ENCODE measurements at regions of chr16 and their contacts with region 1.

Region 1: DNA sequence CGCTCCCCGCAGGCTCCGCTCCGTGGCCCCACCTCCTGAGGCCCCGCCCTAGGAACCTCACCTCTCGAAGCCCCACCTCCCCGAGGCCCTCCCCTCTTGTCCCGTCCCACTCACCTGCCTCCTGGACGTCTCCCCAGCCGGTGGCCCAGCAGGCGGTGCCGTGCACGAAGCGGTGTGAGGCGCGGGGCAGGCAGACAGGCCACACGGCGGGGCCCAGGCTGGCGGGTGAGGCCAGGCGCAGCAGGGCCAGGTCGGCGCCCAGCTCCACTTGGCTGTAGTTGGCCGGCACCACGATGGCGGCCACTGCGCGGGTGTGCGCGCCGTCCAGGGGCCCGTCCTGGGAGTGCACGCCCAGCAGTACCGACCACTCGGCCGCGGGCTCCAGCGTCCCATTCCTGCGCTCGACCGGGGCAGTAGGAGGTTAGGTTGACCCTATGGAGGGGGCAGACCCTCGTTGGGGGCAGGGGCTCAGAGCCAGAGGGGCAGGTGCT is 1.5 kb downstream of the PRSS36 start:
- DNase-seq: peak; percentile 83
- H3K4me3 Mint-ChIP-seq: peak overlapping the region; percentile 47
- H3K27ac Mint-ChIP-seq: no peak overlapping the region
- H3K4me1 Mint-ChIP-seq: peaks cover 38% of the 10 kb centered on the region
- H3K27me3 Mint-ChIP-seq: peaks cover 29% of the 10 kb centered on the region
- CTCF ChIP-seq: no peak

Region 2: DNA sequence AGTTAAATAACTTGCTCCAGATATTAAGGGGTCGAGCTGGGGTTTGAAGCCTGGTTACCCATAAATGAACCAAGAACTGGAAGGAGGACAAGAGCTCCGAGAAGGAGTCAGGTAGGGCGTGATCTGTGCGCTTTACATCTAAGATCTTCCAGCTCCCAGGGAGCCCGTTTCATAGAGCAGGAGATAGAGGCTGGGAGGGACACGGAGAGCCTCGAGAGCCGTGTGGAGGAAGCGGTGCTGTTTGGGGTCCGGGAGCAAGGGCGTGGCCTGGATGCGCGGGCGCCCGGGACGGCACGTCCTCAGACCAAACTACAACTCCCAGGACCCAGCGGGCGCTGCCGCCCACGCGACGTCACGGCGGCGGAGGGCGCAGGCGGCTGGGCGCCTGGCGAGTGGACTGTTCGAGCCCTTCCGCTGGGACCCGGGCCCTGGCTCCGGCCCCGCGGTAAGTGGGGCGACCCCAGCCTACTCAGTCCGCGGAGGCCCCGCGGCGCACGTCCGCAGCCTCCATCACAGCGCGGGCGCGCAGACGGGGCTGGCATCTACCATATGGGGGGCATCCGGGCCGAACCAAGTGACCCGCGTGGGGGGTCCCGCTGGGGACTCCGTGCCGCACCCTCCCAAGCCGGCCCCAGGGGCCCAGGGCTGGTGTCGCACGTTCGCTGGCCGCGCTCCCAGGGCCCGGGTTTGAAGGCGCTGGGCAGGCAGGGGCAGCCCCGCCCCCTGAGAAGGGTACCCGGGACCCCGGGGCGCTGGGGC is 40.1 kb before region 1 on chr16 and contains the start of gene BCKDK:
- CTCF ChIA-PET with region 1: no interaction called
- intact Hi-C with region 1: loop called (anchors 5 kb)
- DNase-seq: peak; percentile 76
- H3K4me3 Mint-ChIP-seq: peak within 1 kb of the TSS; percentile 64
- H3K27ac Mint-ChIP-seq: peak within 1 kb of the TSS; percentile 74
- H3K4me1 Mint-ChIP-seq: peaks cover 31% of the 10 kb centered on the region
- H3K27me3 Mint-ChIP-seq: no peaks in the 10 kb centered on the region
- CTCF ChIP-seq: no peak
- total RNA-seq, gene BCKDK: 49.3 and 52.0 TPM in 2 replicates

Region 3: DNA sequence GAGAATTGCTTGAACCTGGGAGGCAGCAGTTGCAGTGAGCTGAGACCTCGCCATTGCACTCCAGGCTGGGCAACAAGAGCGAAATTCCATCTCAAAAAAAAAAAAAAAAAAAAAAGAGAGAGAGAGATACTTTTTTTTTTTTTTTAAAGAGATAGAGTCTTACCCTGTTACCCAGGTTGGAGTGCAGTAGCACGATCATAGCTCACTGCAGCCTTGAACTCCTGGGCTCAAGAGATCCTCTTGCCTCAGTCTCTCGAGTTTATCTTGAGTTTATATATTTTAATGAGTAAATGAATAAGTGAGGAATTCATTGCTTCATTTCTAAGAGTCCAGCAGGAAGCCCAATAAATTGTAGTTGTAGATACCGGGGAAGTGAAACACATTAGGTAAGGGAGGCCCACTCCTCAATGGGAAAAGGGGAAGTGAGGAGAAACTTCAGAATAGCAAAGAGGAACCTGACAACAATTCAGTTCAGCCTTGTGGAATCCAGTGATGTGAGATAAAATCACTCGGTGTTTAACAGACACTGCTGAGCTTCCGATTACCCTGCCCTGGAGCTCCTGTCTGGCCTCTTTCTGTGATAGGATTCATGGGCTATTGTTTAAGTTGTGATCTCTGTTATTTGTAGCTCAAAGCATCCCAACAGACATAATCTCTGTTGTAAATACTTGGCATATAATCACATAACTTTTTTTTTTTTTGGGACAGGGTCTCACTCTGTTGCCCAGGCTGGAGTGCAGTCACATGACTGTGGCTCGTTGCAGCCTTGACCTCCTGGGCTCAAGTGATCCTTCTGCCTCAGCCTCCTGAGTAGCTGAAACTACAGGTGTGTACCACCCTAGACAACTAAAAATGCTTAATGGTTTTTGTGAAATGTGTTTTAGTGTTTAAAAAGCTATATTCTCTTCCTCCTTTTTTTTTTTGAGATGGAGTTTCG is 95.7 kb after region 1 on chr16:
- CTCF ChIA-PET with region 1: no interaction called
- intact Hi-C with region 1: no loop called
- DNase-seq: no peak
- H3K4me3 Mint-ChIP-seq: no peak overlapping the region
- H3K27ac Mint-ChIP-seq: no peak overlapping the region
- H3K4me1 Mint-ChIP-seq: no peaks in the 10 kb centered on the region
- H3K27me3 Mint-ChIP-seq: peaks cover 46% of the 10 kb centered on the region
- CTCF ChIP-seq: no peak

Region 4: GRCh38 chr16:31507929-31508705 is 359.8 kb after region 1 on chr16 and contains the start of gene RUSF1:
- CTCF ChIA-PET with region 1: no interaction called
- intact Hi-C with region 1: no loop called
- DNase-seq: peak; percentile 93
- H3K4me3 Mint-ChIP-seq: peak within 1 kb of the TSS; percentile 88
- H3K27ac Mint-ChIP-seq: peak within 1 kb of the TSS; percentile 96
- H3K4me1 Mint-ChIP-seq: peaks cover 8% of the 10 kb centered on the region
- H3K27me3 Mint-ChIP-seq: peaks cover 10% of the 10 kb centered on the region
- CTCF ChIP-seq: no peak
- total RNA-seq, gene RUSF1: 96.0 and 105 TPM in 2 replicates

Measured in Calu3 (cell line).